Naive thymus-derived CD4-positive, alpha-beta T cell (primary cell): ENCODE measurements at regions of chr1 and their contacts with region 1.

Region 1: DNA sequence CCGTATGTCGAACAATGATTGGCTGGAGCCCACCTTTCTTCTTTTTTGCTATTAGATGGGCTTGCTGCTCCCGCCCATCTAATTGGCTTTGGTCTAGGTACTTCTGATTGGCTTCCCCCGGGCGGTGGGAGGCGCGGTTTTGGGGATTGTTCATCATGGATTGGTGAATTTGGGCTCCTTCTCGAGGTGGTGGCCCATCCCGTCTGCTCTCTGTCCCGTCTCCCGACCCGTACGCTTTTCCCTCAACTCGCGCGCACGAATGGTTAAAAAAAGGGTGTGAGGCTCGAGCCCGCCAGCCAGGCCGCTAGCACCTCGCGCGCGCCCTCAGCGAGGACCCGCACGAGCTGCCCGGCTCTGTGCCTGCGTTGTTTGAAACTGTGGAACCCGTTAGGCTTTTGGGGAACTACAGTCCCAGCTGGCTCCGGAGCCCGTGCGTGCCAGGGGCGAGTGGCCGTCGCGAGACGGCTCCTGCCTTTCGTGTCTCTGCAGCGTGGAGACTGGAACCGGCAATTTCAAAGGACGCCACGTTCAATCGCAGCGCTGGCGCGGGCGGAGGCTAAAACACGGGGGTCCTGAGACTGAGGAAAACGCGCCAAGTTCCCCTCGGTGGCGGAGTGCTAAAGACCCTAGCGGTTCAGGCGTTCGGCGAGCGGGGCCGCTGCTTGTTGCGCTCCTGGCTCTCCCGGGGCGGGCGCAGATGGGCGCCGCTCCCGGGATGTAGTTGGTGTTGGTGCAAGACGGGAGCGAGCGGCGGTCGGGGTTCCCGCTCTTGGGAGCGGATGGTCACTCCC is at the start of gene USP1:
- DNase-seq: peak in 8 of 9 donors; percentile 85 to 100 (median 98)
- ATAC-seq: peak; percentile 90
- H3K4me3 ChIP-seq: peak within 1 kb of the TSS; percentile 98
- H3K4me3 Mint-ChIP-seq: peak within 1 kb of the TSS; percentile 90 to 98 (median 96)
- H3K27ac ChIP-seq: peak within 1 kb of the TSS; percentile 95
- H3K27ac Mint-ChIP-seq: peak within 1 kb of the TSS; percentile 97 to 100 (median 99)
- H3K4me1 ChIP-seq: peaks cover 13 to 29% of the 10 kb centered on the region in 2 donors
- H3K4me1 Mint-ChIP-seq: peaks cover 13 to 56% (median 43%) of the 10 kb centered on the region in 7 donors
- H3K27me3 ChIP-seq: no peaks in the 10 kb centered on the region
- H3K27me3 Mint-ChIP-seq: peaks cover 0 to 7% (median 0%) of the 10 kb centered on the region in 5 donors
- total RNA-seq, gene USP1: 20.5 to 65.7 (median 38.8) TPM

Region 2: GRCh38 chr1:61724813-61725694 is 711.6 kb before region 1 on chr1 and contains the start of gene TM2D1:
- CTCF ChIA-PET with region 1: no interaction called
- POLR2A ChIA-PET with region 1: no interaction called
- intact Hi-C with region 1: loop called (anchors 2 to 10 kb)
- DNase-seq: peak; percentile 72 to 89 (median 81)
- ATAC-seq: peak; percentile 98
- H3K4me3 ChIP-seq: peak within 1 kb of the TSS; percentile 96
- H3K4me3 Mint-ChIP-seq: peak within 1 kb of the TSS; percentile 86 to 99 (median 96)
- H3K27ac ChIP-seq: peak within 1 kb of the TSS; percentile 92
- H3K27ac Mint-ChIP-seq: peak within 1 kb of the TSS; percentile 94 to 99 (median 97)
- H3K4me1 ChIP-seq: peaks cover 13 to 17% of the 10 kb centered on the region in 2 donors
- H3K4me1 Mint-ChIP-seq: peaks cover 16 to 44% (median 39%) of the 10 kb centered on the region in 7 donors
- H3K27me3 ChIP-seq: no peaks in the 10 kb centered on the region
- H3K27me3 Mint-ChIP-seq: no peaks in the 10 kb centered on the region
- total RNA-seq, gene TM2D1: 26.8 to 57.6 (median 41.1) TPM

Region 3: GRCh38 chr1:61741711-61742619 is 694.7 kb before region 1 on chr1 and contains the start of gene PATJ:
- CTCF ChIA-PET with region 1: no interaction called
- POLR2A ChIA-PET with region 1: no interaction called
- intact Hi-C with region 1: loop called in 1 of 2 experiments (anchors 5 kb)
- DNase-seq: peak; percentile 56 to 78 (median 73)
- ATAC-seq: peak; percentile 93
- H3K4me3 ChIP-seq: peak within 1 kb of the TSS; percentile 62
- H3K4me3 Mint-ChIP-seq: peak within 1 kb of the TSS; percentile 94 to 100 (median 97)
- H3K27ac ChIP-seq: peak within 1 kb of the TSS; percentile 76
- H3K27ac Mint-ChIP-seq: peak within 1 kb of the TSS; percentile 88 to 99 (median 96)
- H3K4me1 ChIP-seq: peaks cover 9 to 13% of the 10 kb centered on the region in 2 donors
- H3K4me1 Mint-ChIP-seq: peaks cover 17 to 46% (median 35%) of the 10 kb centered on the region in 7 donors
- H3K27me3 ChIP-seq: no peaks in the 10 kb centered on the region
- H3K27me3 Mint-ChIP-seq: no peaks in the 10 kb centered on the region
- total RNA-seq, gene PATJ: 13.4 to 64.5 (median 34.0) TPM

Region 4: GRCh38 chr1:62271948-62272728 is 164.5 kb before region 1 on chr1:
- CTCF ChIA-PET with region 1: no interaction called
- POLR2A ChIA-PET with region 1: interaction called, 7 read pairs
- intact Hi-C with region 1: loop called in 1 of 2 experiments (anchors 1 kb)
- DNase-seq: peak; percentile 19 to 85 (median 73)
- ATAC-seq: peak; percentile 82
- H3K4me3 ChIP-seq: peak overlapping the region; percentile 25
- H3K4me3 Mint-ChIP-seq: peak overlapping the region; percentile 37 to 80 (median 70)
- H3K27ac ChIP-seq: peak overlapping the region; percentile 27
- H3K27ac Mint-ChIP-seq: peak overlapping the region; percentile 85 to 97 (median 95)
- H3K4me1 ChIP-seq: peaks cover 6 to 19% of the 10 kb centered on the region in 2 donors
- H3K4me1 Mint-ChIP-seq: peaks cover 25 to 42% (median 34%) of the 10 kb centered on the region in 7 donors
- H3K27me3 ChIP-seq: no peaks in the 10 kb centered on the region
- H3K27me3 Mint-ChIP-seq: no peaks in the 10 kb centered on the region

Region 5: GRCh38 chr1:62687903-62688686 is 251.4 kb after region 1 on chr1 and contains the start of gene DOCK7:
- CTCF ChIA-PET with region 1: no interaction called
- POLR2A ChIA-PET with region 1: interaction called, 7 read pairs
- intact Hi-C with region 1: loop called (anchors 1 kb)
- DNase-seq: peak; percentile 25 to 63 (median 51)
- ATAC-seq: peak; percentile 76
- H3K4me3 ChIP-seq: peak within 1 kb of the TSS; percentile 84
- H3K4me3 Mint-ChIP-seq: peak within 1 kb of the TSS; percentile 89 to 99 (median 96)
- H3K27ac ChIP-seq: peak within 1 kb of the TSS; percentile 65
- H3K27ac Mint-ChIP-seq: peak within 1 kb of the TSS; percentile 80 to 98 (median 95)
- H3K4me1 ChIP-seq: peaks cover 0 to 8% of the 10 kb centered on the region in 2 donors
- H3K4me1 Mint-ChIP-seq: peaks cover 8 to 32% (median 16%) of the 10 kb centered on the region in 7 donors
- H3K27me3 ChIP-seq: no peaks in the 10 kb centered on the region
- H3K27me3 Mint-ChIP-seq: peaks cover 0 to 10% (median 3%) of the 10 kb centered on the region in 5 donors
- total RNA-seq, gene DOCK7: 5.1 to 15.0 (median 12.4) TPM

Region 6: GRCh38 chr1:63367215-63368103 is 930.8 kb after region 1 on chr1 and contains the start of gene ALG6:
- CTCF ChIA-PET with region 1: no interaction called
- POLR2A ChIA-PET with region 1: no interaction called
- intact Hi-C with region 1: loop called (anchors 1 to 2 kb)
- DNase-seq: peak; percentile 66 to 98 (median 84)
- ATAC-seq: peak; percentile 99
- H3K4me3 ChIP-seq: peak within 1 kb of the TSS; percentile 95
- H3K4me3 Mint-ChIP-seq: peak within 1 kb of the TSS; percentile 91 to 99 (median 94)
- H3K27ac ChIP-seq: peak within 1 kb of the TSS; percentile 72
- H3K27ac Mint-ChIP-seq: peak within 1 kb of the TSS; percentile 79 to 93 (median 84)
- H3K4me1 ChIP-seq: peaks cover 0 to 7% of the 10 kb centered on the region in 2 donors
- H3K4me1 Mint-ChIP-seq: peaks cover 23 to 46% (median 36%) of the 10 kb centered on the region in 7 donors
- H3K27me3 ChIP-seq: no peaks in the 10 kb centered on the region
- H3K27me3 Mint-ChIP-seq: peaks cover 0 to 7% (median 0%) of the 10 kb centered on the region in 5 donors
- total RNA-seq, gene ALG6: 16.1 to 29.8 (median 27.3) TPM

Region 7: DNA sequence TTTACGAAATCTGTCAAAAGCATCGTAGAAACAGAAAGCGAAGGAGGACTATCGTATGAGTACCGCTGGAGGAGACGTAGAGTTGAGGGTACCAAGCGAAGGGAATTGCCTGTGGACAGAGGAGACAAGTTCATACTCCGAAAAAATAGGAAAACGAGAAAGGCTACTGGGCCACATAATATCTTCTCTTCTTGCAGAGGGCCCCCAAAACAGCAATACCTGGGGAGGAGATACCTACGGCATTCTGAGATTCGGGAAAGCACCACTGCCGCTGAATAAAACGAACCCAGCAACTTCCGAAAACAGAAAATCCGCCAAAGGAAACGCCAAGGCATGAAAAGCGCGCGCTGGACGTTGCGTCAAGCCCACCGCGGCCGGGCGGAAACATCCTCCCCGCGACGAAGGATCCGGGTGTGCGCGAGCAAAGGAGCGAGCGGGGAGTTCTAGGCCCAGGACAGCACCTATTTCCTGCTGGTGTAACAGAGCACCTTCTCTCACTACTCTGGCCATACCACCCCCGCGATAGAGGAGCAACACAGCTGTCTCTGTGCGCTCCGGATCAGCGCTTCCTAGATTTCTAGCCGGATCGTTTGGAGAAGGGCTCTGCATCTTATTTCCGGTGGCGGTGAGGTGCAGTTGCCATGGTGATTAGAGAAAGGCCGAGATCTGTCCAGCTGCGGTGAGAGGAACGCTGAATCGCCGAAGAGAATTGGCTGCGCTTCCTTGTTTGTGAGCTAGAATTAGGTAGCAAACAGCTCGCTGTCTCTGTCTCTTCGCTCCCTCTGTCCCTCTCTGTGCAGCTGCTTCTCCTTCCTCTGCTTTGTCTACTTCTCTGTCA is 1086.4 kb after region 1 on chr1 and contains the starts of genes EFCAB7 and ITGB3BP:
- CTCF ChIA-PET with region 1: no interaction called
- POLR2A ChIA-PET with region 1: interaction called, 4 read pairs
- intact Hi-C with region 1: loop called (anchors 1 to 2 kb)
- DNase-seq: peak; percentile 73 to 86 (median 82)
- ATAC-seq: peak; percentile 92
- H3K4me3 ChIP-seq: peak within 1 kb of the TSS; percentile 83
- H3K4me3 Mint-ChIP-seq: peak within 1 kb of the TSS; percentile 82 to 100 (median 98)
- H3K27ac ChIP-seq: peak within 1 kb of the TSS; percentile 78
- H3K27ac Mint-ChIP-seq: peak within 1 kb of the TSS; percentile 93 to 99 (median 97)
- H3K4me1 ChIP-seq: peaks cover 7 to 13% of the 10 kb centered on the region in 2 donors
- H3K4me1 Mint-ChIP-seq: peaks cover 12 to 47% (median 36%) of the 10 kb centered on the region in 7 donors
- H3K27me3 ChIP-seq: no peaks in the 10 kb centered on the region
- H3K27me3 Mint-ChIP-seq: peaks cover 0 to 2% (median 0%) of the 10 kb centered on the region in 5 donors
- total RNA-seq, gene EFCAB7: 4.1 to 13.5 (median 9.2) TPM
- total RNA-seq, gene ITGB3BP: 16.5 to 52.6 (median 32.9) TPM